ENCODE measurements at regions of chr14 and their contacts with region 1.

Region 1: DNA sequence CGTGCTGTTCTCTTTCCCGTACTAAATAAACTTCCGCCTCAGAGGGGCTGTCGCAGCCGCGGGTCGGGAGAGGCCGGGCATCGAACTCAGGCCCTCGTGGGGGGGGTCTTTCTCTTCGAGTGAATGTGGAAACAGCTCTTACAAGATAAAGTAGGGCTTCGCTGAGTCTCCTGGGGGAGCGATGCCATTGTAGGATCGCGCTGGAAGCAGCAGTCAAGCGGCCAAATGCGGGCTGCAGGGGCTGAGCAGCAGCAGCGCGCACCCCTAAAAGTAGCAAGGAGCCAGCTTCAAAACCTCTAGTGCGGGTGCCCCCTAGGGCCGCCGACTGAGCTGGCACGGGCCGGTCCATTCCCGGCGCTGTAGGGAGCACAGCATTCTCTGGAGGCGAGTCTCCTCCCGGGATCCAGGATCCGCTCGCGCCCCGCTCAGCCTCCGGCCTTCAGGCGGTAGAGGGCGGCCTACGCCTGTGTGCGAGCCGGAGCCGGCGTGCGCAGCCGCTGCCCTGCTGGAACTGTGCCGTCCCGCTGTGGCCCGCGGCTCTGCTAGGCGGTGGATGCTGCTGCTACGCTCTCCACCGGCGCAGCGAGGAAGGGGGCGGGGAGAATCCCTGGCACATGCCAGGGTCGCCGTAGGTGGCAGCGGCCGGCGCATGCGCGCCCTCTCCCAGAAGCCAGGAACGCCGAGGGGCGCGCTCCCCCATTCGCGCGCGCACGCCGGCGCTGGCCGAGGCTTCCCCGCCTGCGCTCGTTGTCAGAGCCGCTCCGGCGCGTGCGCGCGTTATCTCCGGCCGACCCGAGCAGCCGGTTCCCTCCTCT is at the start of gene FUT8:
- DNase-seq: peak; percentile 80
- ATAC-seq: peak; percentile 89
- H3K4me3 ChIP-seq: peak within 1 kb of the TSS; percentile 97
- H3K27ac ChIP-seq: peak within 1 kb of the TSS; percentile 88
- H3K4me1 ChIP-seq: no peaks in the 10 kb centered on the region
- H3K27me3 ChIP-seq: no peaks in the 10 kb centered on the region
- CTCF ChIP-seq: peak; percentile 51 to 67 (median 61)
- EP300 ChIP-seq: no peak
- POLR2A ChIP-seq: peak; percentile 90
- RAD21 ChIP-seq: peak; percentile 54
- polyA plus RNA-seq, gene FUT8: 25.0 to 45.6 TPM

Region 2: DNA sequence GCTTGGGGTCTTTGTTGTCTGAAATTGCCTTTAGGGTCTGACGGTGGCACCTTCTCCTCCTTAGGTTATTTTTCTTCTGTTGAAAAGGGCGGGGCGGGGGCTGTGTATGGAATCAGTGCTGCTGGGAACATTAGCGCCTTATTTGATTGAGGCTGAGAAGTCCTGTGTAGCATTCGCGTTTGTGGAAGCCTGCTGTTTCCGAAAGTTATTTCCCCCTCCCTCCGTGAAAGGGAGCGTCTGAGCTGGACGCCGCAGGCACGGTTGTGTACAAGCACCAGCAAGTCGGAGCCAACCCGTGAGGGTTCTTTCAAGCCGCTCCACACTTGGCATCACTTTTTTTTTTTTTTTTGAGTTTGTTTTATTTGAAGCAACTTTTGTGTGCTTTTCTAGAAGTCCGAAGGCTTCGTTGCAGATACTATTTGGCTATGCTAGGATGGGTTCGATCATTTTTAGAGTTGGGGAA is 1558.4 kb before region 1 on chr14:
- CTCF ChIA-PET with region 1: no interaction called
- POLR2A ChIA-PET with region 1: no interaction called
- RAD21 ChIA-PET with region 1: no interaction called
- SMC1A ChIA-PET with region 1: no interaction called
- in situ Hi-C with region 1: no loop called
- intact Hi-C with region 1: no loop called
- DNase-seq: no peak
- ATAC-seq: peak; percentile 50
- H3K4me3 ChIP-seq: peak overlapping the region; percentile 94
- H3K27ac ChIP-seq: peak overlapping the region; percentile 8
- H3K4me1 ChIP-seq: peaks cover 6% of the 10 kb centered on the region; the same call in 1 of the 2 replicates
- H3K27me3 ChIP-seq: no peaks in the 10 kb centered on the region
- CTCF ChIP-seq: no peak
- EP300 ChIP-seq: no peak
- POLR2A ChIP-seq: no peak
- RAD21 ChIP-seq: no peak

Region 3: GRCh38 chr14:65222440-65222858 is 189.8 kb before region 1 on chr14:
- CTCF ChIA-PET with region 1: interaction called, 136 read pairs
- POLR2A ChIA-PET with region 1: interaction called, 3 read pairs
- RAD21 ChIA-PET with region 1: interaction called, 30 read pairs
- SMC1A ChIA-PET with region 1: interaction called, 56 read pairs
- in situ Hi-C with region 1: no loop called
- intact Hi-C with region 1: loop called (anchors 1 kb)
- DNase-seq: no peak
- ATAC-seq: peak; percentile 86
- H3K4me3 ChIP-seq: no peak overlapping the region
- H3K27ac ChIP-seq: peak overlapping the region; percentile 20; the same call in 1 of the 2 replicates
- H3K4me1 ChIP-seq: peaks cover 31% of the 10 kb centered on the region
- H3K27me3 ChIP-seq: no peaks in the 10 kb centered on the region
- CTCF ChIP-seq: peak; percentile 84 to 91 (median 84)
- EP300 ChIP-seq: no peak
- POLR2A ChIP-seq: no peak
- RAD21 ChIP-seq: peak; percentile 95

Region 4: GRCh38 chr14:65356327-65356852 is 55.8 kb before region 1 on chr14:
- CTCF ChIA-PET with region 1: interaction called, 11 read pairs
- POLR2A ChIA-PET with region 1: interaction called, 6 read pairs
- RAD21 ChIA-PET with region 1: interaction called, 10 read pairs
- SMC1A ChIA-PET with region 1: interaction called, 10 read pairs
- in situ Hi-C with region 1: no loop called
- intact Hi-C with region 1: loop called (anchors 2 kb)
- DNase-seq: no peak
- ATAC-seq: no peak
- H3K4me3 ChIP-seq: no peak overlapping the region
- H3K27ac ChIP-seq: peak overlapping the region; percentile 72
- H3K4me1 ChIP-seq: peaks cover 64% of the 10 kb centered on the region
- H3K27me3 ChIP-seq: no peaks in the 10 kb centered on the region
- CTCF ChIP-seq: no peak
- EP300 ChIP-seq: no peak
- POLR2A ChIP-seq: no peak
- RAD21 ChIP-seq: no peak

Region 5: DNA sequence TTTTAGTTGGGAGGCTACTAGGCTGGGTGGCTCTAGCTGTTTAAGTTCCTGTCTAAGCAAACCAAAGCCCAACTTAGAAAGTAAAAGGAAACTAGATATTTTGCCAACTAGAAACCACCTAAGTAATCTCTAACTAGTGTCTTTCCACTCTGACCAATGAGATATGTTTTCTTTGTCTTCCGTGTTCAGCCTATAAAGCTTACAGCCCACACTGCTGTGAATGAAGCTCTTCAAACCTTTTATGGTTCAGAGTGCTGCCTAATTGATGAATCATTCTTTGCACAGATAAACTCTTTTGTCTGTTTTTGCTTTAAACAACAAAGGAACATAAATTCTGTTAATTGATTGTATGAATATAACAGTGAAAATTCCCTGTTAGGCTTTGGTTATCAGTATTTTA is 66.4 kb after region 1 on chr14:
- CTCF ChIA-PET with region 1: interaction called, 20 read pairs
- POLR2A ChIA-PET with region 1: interaction called, 3 read pairs
- RAD21 ChIA-PET with region 1: interaction called, 16 read pairs
- SMC1A ChIA-PET with region 1: interaction called, 43 read pairs
- in situ Hi-C with region 1: no loop called
- intact Hi-C with region 1: loop called (anchors 5 kb)
- DNase-seq: no peak
- ATAC-seq: peak; percentile 74
- H3K4me3 ChIP-seq: no peak overlapping the region
- H3K27ac ChIP-seq: no peak overlapping the region
- H3K4me1 ChIP-seq: peaks cover 20% of the 10 kb centered on the region
- H3K27me3 ChIP-seq: no peaks in the 10 kb centered on the region
- CTCF ChIP-seq: no peak
- EP300 ChIP-seq: no peak
- POLR2A ChIP-seq: no peak
- RAD21 ChIP-seq: no peak

Region 6: DNA sequence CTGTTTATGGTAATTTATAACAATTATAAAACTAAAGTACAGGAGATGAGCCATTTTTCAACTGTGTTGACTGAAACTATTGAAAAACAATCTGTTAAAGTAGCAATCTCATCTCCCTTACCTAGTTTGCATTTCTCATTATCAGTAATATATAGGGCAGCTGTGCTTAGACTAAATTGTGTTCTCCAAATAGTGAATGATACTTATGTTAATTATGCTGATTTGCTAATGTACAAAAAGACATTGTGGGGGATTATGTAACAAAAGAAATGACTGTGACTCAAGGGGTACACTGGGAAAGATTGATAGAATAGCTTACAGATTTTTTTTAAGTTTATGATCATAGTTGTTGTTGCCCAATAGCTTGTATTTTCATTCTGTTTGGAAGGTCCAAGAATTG is 208.0 kb after region 1 on chr14:
- CTCF ChIA-PET with region 1: interaction called, 10 read pairs
- POLR2A ChIA-PET with region 1: no interaction called
- RAD21 ChIA-PET with region 1: interaction called, 14 read pairs
- SMC1A ChIA-PET with region 1: interaction called, 18 read pairs
- in situ Hi-C with region 1: no loop called
- intact Hi-C with region 1: no loop called
- DNase-seq: no peak
- ATAC-seq: no peak
- H3K4me3 ChIP-seq: no peak overlapping the region
- H3K27ac ChIP-seq: no peak overlapping the region
- H3K4me1 ChIP-seq: no peaks in the 10 kb centered on the region
- H3K27me3 ChIP-seq: no peaks in the 10 kb centered on the region
- CTCF ChIP-seq: no peak
- EP300 ChIP-seq: no peak
- POLR2A ChIP-seq: no peak
- RAD21 ChIP-seq: no peak

Region 7: GRCh38 chr14:65832431-65833266 is 420.4 kb after region 1 on chr14:
- CTCF ChIA-PET with region 1: interaction called, 323 read pairs
- POLR2A ChIA-PET with region 1: no interaction called
- RAD21 ChIA-PET with region 1: interaction called, 287 read pairs
- SMC1A ChIA-PET with region 1: interaction called, 288 read pairs
- in situ Hi-C with region 1: no loop called
- intact Hi-C with region 1: no loop called
- DNase-seq: no peak
- ATAC-seq: no peak
- H3K4me3 ChIP-seq: no peak overlapping the region
- H3K27ac ChIP-seq: no peak overlapping the region
- H3K4me1 ChIP-seq: no peaks in the 10 kb centered on the region
- H3K27me3 ChIP-seq: peaks cover 1 to 4% of the 10 kb centered on the region in 2 experiments; a peak in 2 of 4 replicates
- CTCF ChIP-seq: peak; percentile 10 to 15 (median 15); a peak in 2 of 6 replicates
- EP300 ChIP-seq: no peak
- POLR2A ChIP-seq: no peak
- RAD21 ChIP-seq: 0 out of 2 replicates have a peak, but pooled peaks have one; percentile 5

Measured in GM12878 (cell line).